WTC11 (cell line): ENCODE measurements at regions of chr6 and their contacts with region 1.

Region 1: DNA sequence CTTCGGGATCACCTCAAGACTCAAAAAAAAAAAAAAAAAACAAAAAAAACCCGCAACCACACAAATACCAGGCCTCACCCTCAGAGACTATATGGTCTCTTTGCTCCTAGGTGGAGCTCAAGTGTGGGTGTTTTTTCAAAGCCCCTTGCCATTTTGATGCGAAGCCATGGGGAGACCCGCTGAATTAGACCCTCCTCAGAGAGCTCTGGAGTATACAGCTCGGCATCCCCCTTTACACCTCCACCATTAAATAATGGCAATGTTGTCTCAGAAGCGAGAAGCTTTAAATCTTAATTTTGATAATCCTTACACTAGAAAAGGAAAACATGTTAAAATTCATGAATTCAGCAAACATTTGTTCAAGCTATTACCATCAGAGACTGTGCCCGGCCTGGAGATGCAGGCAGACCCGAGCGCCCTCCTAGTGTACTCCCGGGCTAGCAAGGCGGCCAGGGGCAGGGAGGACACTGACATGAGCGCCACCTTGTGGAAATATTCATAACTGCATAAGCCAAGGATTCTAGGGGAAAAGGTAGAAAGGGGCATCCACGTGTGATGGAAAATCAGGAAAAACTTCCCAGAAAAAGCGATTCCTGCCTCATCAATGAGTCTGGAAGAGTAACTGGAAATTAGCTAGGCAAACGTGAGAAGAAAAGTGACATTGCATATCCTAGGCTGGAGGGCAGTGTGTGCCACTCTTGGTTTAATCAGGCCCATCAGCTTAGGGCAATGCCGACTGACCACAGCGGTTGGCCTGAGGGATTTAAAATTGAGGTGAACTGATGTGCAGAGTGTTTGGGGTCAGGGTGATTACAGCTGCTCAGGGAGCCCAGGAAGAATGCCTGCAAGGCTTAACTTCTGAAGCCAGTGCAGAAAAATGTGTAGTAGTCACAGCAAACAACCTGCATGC is 72.5 kb downstream of the B3GAT2 start:
- DNase-seq: peak; percentile 71
- ATAC-seq: peak; percentile 88
- H3K4me3 Mint-ChIP-seq: no peak overlapping the region
- H3K27ac Mint-ChIP-seq: no peak overlapping the region; the same call in 1 of the 2 replicates
- H3K4me1 Mint-ChIP-seq: peaks cover 36% of the 10 kb centered on the region
- H3K27me3 Mint-ChIP-seq: no peaks in the 10 kb centered on the region; the same call in 1 of the 2 replicates
- CTCF ChIP-seq: peak; percentile 85

Region 2: GRCh38 chr6:70520575-70520974 is 363.8 kb before region 1 on chr6:
- CTCF ChIA-PET with region 1: interaction called, 22 read pairs
- POLR2A ChIA-PET with region 1: no interaction called
- DNase-seq: no peak
- ATAC-seq: no peak; the same call in 1 of the 2 replicates
- H3K4me3 Mint-ChIP-seq: no peak overlapping the region
- H3K27ac Mint-ChIP-seq: no peak overlapping the region
- H3K4me1 Mint-ChIP-seq: peaks cover 5% of the 10 kb centered on the region; the same call in 1 of the 2 replicates
- H3K27me3 Mint-ChIP-seq: no peaks in the 10 kb centered on the region
- CTCF ChIP-seq: no peak

Region 3: GRCh38 chr6:70706491-70707123 is 177.7 kb before region 1 on chr6:
- CTCF ChIA-PET with region 1: interaction called, 37 read pairs
- POLR2A ChIA-PET with region 1: interaction called, 3 read pairs
- DNase-seq: no peak
- ATAC-seq: no peak
- H3K4me3 Mint-ChIP-seq: no peak overlapping the region
- H3K27ac Mint-ChIP-seq: no peak overlapping the region
- H3K4me1 Mint-ChIP-seq: peaks cover 8% of the 10 kb centered on the region
- H3K27me3 Mint-ChIP-seq: no peaks in the 10 kb centered on the region
- CTCF ChIP-seq: peak; percentile 36; the same call in 1 of the 2 replicates

Region 4: GRCh38 chr6:70811788-70812187 is 72.5 kb before region 1 on chr6:
- CTCF ChIA-PET with region 1: interaction called, 10 read pairs
- POLR2A ChIA-PET with region 1: no interaction called
- DNase-seq: no peak
- ATAC-seq: no peak
- H3K4me3 Mint-ChIP-seq: no peak overlapping the region
- H3K27ac Mint-ChIP-seq: no peak overlapping the region
- H3K4me1 Mint-ChIP-seq: no peaks in the 10 kb centered on the region
- H3K27me3 Mint-ChIP-seq: no peaks in the 10 kb centered on the region
- CTCF ChIP-seq: no peak

Region 5: GRCh38 chr6:70864401-70864800 is 19.9 kb before region 1 on chr6:
- CTCF ChIA-PET with region 1: interaction called, 12 read pairs
- POLR2A ChIA-PET with region 1: no interaction called
- DNase-seq: no peak
- ATAC-seq: peak; percentile 88
- H3K4me3 Mint-ChIP-seq: no peak overlapping the region
- H3K27ac Mint-ChIP-seq: peak overlapping the region; percentile 96
- H3K4me1 Mint-ChIP-seq: peaks cover 13% of the 10 kb centered on the region
- H3K27me3 Mint-ChIP-seq: no peaks in the 10 kb centered on the region
- CTCF ChIP-seq: no peak

Region 6: DNA sequence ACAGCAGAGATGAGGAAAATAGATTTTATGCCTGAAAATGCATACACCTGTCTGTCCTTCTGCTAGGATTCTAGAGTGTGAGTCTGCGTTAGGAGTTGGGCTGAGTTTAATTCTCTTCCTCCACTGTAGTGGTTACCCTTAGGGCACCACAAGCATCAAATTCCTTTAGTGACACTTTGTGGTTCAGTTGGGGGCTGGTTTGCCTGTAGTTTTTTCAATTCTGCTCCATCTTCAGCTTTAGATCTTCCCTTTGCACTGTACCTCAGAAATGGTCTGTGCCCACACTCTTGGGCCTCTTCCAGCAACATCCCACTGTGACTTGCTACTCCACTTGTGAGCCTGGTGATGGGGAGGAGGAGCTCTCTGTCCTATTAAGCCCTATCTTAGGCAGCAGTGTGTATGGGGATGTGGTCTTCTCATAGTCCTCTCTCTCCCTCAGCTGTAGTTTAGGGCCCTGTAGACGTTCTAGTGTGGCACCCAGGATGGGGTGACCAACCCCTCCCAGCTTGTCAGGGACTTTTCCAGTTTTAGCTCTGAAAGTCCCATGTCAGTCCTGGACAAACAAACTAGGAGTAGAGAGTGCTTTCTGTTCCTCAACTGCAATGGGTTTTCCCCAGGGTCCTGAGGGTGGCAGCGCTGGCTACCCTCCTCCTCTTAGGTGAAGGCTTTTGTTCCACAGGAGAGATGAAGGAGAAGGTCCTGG is 384.6 kb after region 1 on chr6:
- CTCF ChIA-PET with region 1: no interaction called
- POLR2A ChIA-PET with region 1: no interaction called
- DNase-seq: no peak
- ATAC-seq: no peak
- H3K4me3 Mint-ChIP-seq: no peak overlapping the region
- H3K27ac Mint-ChIP-seq: no peak overlapping the region
- H3K4me1 Mint-ChIP-seq: no peaks in the 10 kb centered on the region
- H3K27me3 Mint-ChIP-seq: peaks cover 27% of the 10 kb centered on the region
- CTCF ChIP-seq: no peak